ENCODE measurements at regions of chr12 and their contacts with region 1.

Region 1: GRCh38 chr12:50637870-50638481 is 125.9 kb upstream of the ATF1 start:
- DNase-seq: peak; percentile 59
- CTCF ChIP-seq: peak; percentile 56

Region 2: DNA sequence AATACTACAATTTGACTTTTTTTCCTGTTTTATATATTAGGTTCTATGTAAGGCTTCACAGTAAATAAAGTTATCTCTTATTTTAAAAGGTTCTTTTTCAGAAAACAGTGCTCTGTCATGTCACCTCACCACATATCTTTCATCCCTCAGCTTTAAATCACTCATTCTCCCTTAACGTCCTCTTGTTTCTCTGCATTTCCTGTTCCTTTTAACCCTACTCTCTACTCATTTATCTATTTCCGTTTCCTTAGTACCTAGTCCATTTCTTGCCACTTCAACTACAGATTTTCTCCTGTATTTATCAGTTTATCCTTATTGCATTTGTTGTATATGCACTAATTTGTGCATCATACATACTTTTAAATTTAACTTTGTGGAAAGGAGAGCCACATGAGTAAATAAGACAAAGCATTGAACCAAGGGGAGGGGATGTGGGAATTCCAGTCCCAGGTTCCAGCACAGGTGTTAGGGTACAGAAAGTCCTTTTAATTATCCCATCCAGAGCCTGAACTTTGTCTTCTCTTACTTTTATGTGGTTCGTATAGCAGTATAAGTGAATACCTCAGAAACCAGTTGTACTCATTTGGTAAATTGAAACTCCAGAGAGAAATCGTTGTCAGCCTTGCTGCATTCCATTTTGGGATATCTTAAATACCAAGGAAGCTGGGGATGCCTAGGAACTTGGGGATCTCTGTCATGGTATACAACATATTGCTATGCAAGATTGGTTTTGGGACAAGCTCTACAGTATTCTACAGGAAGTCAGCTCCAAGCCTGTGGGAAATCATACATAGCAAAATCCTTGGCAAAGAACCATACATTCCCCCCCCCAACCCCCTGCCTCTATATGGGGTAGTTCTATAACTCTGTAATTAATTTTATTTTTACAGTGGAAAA is 12.7 kb before region 1 on chr12:
- CTCF ChIA-PET with region 1: interaction called, 18 read pairs
- POLR2A ChIA-PET with region 1: no interaction called
- DNase-seq: no peak
- CTCF ChIP-seq: no peak

Region 3: DNA sequence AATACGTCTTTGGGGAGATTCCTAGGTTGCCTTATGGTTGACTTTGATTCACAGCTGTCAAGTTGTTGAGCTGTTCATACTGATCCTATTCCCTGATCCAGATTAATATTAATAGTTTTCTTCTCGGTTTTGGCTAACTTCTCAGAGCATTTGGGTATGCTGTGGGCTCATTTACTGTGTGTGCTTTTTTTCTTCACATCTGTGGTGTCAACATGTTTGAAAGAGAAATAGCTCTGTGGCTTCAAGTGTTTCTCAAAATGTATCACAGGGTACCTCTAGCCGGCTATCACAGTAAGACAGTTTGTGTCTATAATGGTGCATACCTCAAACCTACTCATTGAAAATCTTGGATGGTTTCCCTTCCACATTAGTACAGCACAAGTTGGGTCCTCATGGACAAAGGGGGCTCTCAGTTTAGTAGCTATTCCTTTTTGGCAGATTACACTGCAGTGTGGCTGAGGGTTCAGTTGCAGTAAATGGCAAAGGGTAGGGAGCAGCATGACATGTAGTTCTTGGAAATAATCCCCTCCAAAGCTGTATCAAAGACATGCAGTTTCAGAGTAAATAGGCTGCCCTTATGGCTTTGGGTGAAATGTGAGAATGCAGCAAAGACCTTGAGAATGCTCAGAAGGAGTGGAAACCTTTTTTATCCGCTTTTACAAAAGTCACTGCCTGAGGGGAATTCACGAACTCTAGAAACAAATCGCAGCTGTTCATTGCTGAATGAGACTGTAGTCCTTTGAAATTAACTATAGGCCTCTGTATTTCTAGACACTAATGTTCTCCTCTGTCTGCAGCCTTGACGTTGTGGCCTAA is 23.5 kb after region 1 on chr12:
- CTCF ChIA-PET with region 1: interaction called, 12 read pairs
- POLR2A ChIA-PET with region 1: interaction called, 3 read pairs
- DNase-seq: peak; percentile 41
- CTCF ChIP-seq: no peak

Region 4: GRCh38 chr12:50913224-50913623 is 275.2 kb after region 1 on chr12:
- CTCF ChIA-PET with region 1: no interaction called
- POLR2A ChIA-PET with region 1: no interaction called
- DNase-seq: no peak
- CTCF ChIP-seq: no peak

Region 5: DNA sequence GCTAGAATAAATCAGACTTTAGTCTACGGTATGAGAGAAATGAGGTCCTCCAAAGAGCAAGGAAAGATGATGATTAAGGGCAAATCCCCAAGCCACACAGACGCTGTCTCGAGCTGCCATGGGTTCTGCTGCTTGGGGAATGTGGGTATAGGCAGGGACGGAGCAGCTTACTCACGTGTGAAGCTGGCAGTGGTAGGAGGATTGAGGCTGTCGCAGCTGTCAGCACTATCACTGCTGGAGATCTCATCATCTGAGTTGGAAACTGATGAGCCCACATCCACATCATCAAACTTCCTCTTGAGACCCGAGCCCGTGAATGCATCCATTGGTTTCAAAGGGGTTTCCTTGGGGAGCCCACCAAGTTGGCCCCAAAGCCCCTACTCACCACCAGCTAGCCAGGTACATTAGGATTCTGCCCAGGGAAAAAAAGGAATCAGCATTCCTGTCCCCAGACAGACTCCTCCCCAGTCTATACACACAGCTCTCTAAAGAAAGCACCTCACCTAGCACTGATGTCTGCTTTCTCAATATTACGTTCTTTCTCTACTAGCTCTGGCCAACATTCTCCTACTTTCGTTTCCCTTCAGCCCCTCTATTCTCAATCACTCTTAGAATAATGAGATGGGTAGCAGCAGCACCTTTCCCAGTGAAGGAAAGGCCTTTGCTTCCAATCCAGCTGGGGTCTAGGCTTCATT is 438.4 kb after region 1 on chr12:
- CTCF ChIA-PET with region 1: no interaction called
- POLR2A ChIA-PET with region 1: no interaction called
- DNase-seq: no peak
- CTCF ChIP-seq: no peak

Measured in GM10248 (cell line).